AG04450 (cell line): ENCODE measurements at regions of chr13 and their contacts with region 1.

Region 1: DNA sequence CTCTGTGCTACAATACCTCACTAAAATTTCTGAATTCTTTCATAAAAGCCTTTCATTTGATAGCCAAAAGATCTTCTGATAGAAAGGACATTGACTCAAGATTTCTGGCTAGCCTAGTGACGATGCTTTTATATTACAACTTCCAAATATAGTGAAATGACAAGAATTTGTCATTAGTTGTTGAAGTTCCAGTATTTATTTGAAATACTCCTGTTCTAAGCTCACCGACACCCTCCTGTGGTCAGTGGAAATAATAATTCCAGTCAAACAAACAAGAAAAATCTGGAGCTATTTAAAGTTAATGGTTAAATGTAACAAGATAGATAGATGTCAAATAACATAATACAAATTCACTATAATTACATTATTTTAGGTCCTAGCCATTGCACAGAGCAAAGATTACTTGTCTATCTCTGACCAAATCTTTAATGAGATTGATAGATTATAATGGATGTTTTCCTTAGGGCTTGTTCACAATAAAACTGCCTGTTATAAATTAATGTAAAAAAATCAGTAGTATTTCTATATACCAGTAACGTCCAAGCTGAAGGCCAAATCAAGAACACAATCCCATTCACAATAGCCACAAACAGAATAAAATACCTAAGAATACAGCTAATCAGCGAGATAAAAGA is 195.5 kb downstream of the RGCC start:
- DNase-seq: peak; percentile 42
- H3K4me3 ChIP-seq: no peak overlapping the region
- H3K27ac ChIP-seq: no peak overlapping the region
- H3K27me3 ChIP-seq: no peaks in the 10 kb centered on the region
- CTCF ChIP-seq: peak; percentile 60

Region 2: GRCh38 chr13:41411522-41411921 is 241.3 kb before region 1 on chr13:
- CTCF ChIA-PET with region 1: interaction called, 32 read pairs
- POLR2A ChIA-PET with region 1: no interaction called
- DNase-seq: peak; percentile 16
- H3K4me3 ChIP-seq: no peak overlapping the region
- H3K27ac ChIP-seq: no peak overlapping the region
- H3K27me3 ChIP-seq: no peaks in the 10 kb centered on the region
- CTCF ChIP-seq: peak; percentile 48

Region 3: DNA sequence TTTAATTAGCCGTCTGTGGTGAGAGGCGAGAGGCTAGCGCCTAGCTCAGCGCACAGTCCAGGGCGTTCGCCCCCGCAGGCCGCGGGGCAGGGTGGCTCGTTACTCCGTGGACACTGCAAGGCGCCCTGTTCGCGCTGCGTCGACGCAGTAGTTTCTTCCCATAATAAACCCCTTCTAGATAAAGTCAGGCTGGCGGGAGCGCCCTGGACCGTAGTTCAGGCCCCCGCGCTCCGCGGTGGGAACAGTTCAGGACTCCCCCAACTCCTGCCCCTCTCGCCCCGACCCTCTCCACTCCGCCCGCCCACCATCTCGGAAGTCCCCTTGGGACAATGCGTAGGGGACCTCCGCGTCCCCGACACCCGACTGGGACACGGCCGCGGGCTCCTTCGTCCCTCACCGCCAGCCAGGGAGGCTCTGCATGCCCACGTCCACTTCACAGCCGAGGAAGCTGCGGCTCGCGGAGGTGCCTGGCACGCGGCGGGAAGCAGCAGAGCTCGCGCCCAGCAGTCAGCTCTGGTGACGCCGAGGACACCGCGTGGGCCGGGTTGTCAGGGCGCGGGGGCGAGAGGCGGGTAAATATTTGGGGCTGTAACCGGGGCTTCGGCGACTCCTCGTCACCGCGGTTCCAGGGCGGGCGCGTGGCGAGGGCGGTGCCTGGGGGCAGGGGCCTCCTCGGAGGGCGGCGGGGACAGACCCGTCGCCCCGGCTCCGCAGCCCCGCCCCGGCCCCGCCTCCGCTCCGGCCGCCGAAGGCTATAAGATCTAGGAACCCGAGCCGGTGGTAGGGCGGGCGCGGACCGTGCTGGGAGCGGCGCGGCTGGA is 195.9 kb before region 1 on chr13 and contains the start of gene RGCC:
- CTCF ChIA-PET with region 1: interaction called, 93 read pairs
- POLR2A ChIA-PET with region 1: interaction called, 3 read pairs
- DNase-seq: no peak
- H3K4me3 ChIP-seq: peak within 1 kb of the TSS; percentile 84
- H3K27ac ChIP-seq: no peak within 1 kb of the TSS
- H3K27me3 ChIP-seq: peaks cover 20% of the 10 kb centered on the region
- CTCF ChIP-seq: no peak
- polyA plus RNA-seq, gene RGCC: 141 TPM in 2 replicates

Region 4: DNA sequence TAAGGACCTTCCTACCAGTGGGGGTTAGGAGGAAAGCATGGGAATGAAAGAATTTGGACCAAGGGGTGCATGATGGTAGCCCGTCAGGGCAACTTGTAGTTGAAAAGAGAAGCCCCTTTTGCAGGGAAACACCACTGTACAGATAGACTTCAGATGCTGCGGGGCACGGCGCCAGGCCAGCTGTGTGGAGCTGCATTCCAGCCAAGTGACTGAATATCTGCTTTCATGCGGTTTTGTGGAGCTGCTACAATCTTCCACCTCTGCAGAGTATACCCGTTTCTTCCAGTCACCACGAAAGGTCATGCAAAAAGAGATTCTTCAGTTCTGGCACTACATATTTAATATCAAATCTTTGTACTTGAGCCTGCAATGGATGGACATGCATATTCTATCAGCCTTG is 90.8 kb before region 1 on chr13:
- CTCF ChIA-PET with region 1: interaction called, 11 read pairs
- POLR2A ChIA-PET with region 1: no interaction called
- DNase-seq: peak; percentile 81
- H3K4me3 ChIP-seq: no peak overlapping the region
- H3K27ac ChIP-seq: no peak overlapping the region
- H3K27me3 ChIP-seq: no peaks in the 10 kb centered on the region
- CTCF ChIP-seq: no peak

Region 5: DNA sequence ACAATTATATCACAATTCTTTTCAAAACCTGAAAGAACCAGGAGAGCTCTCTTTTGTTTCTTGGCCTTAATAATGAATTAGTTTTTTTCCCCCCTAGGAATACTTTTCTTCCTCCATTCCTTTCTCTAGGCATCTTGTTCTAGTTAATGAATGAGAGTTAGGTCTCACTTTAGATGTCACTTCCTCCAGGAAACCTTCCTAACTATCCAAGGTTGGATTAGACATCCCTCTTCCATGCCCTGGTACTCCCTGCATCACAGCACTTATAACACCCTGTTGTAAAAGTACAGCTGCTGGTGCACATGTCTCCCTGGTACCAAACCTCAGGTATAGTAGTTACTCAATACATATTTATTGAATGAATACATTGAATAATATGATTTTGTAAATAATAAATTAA is 374.4 kb after region 1 on chr13:
- CTCF ChIA-PET with region 1: interaction called, 11 read pairs
- POLR2A ChIA-PET with region 1: no interaction called
- DNase-seq: no peak
- H3K4me3 ChIP-seq: no peak overlapping the region
- H3K27ac ChIP-seq: no peak overlapping the region
- H3K27me3 ChIP-seq: no peaks in the 10 kb centered on the region
- CTCF ChIP-seq: no peak